IMR-90 (cell line): ENCODE measurements at regions of chr11 and their contacts with region 1.

Region 1: GRCh38 chr11:76512851-76513653 is 68.2 kb downstream of the EMSY start:
- DNase-seq: peak; percentile 65
- ATAC-seq: peak; percentile 80
- H3K4me3 ChIP-seq: no peak overlapping the region
- H3K27ac ChIP-seq: no peak overlapping the region
- H3K4me1 ChIP-seq: peaks cover 3% of the 10 kb centered on the region
- H3K27me3 ChIP-seq: no peaks in the 10 kb centered on the region
- CTCF ChIP-seq: peak; percentile 67
- POLR2A ChIP-seq: no peak
- RAD21 ChIP-seq: peak; percentile 73

Region 2: GRCh38 chr11:75896843-75897419 is 616.1 kb before region 1 on chr11:
- CTCF ChIA-PET with region 1: no interaction called
- POLR2A ChIA-PET with region 1: no interaction called
- dilution Hi-C with region 1: no loop called
- in situ Hi-C with region 1: no loop called
- intact Hi-C with region 1: loop called (anchors 2 kb)
- DNase-seq: peak; percentile 55
- ATAC-seq: peak; percentile 62
- H3K4me3 ChIP-seq: no peak overlapping the region
- H3K27ac ChIP-seq: no peak overlapping the region
- H3K4me1 ChIP-seq: no peaks in the 10 kb centered on the region
- H3K27me3 ChIP-seq: no peaks in the 10 kb centered on the region
- CTCF ChIP-seq: peak; percentile 76
- POLR2A ChIP-seq: no peak
- RAD21 ChIP-seq: peak; percentile 85

Region 3: GRCh38 chr11:76380967-76381719 is 131.9 kb before region 1 on chr11 and contains the starts of genes GVQW3 and THAP12:
- CTCF ChIA-PET with region 1: no interaction called
- POLR2A ChIA-PET with region 1: no interaction called
- dilution Hi-C with region 1: no loop called
- in situ Hi-C with region 1: no loop called
- intact Hi-C with region 1: loop called (anchors 5 kb)
- DNase-seq: peak; percentile 97
- ATAC-seq: peak; percentile 95
- H3K4me3 ChIP-seq: peak within 1 kb of the TSS; percentile 99
- H3K27ac ChIP-seq: peak within 1 kb of the TSS; percentile 73
- H3K4me1 ChIP-seq: peaks cover 8% of the 10 kb centered on the region
- H3K27me3 ChIP-seq: no peaks in the 10 kb centered on the region
- CTCF ChIP-seq: no peak; the same call in 1 of the 2 replicates
- POLR2A ChIP-seq: peak; percentile 39; the same call in 1 of the 2 replicates
- RAD21 ChIP-seq: no peak
- total RNA-seq, gene GVQW3: 0.83 and 1.1 TPM in 2 replicates
- total RNA-seq, gene THAP12: 25.1 and 48.3 TPM in 2 replicates

Region 4: GRCh38 chr11:76444384-76445123 is 68.5 kb before region 1 on chr11 and contains the start of gene EMSY:
- CTCF ChIA-PET with region 1: no interaction called
- POLR2A ChIA-PET with region 1: no interaction called
- dilution Hi-C with region 1: no loop called
- in situ Hi-C with region 1: no loop called
- intact Hi-C with region 1: loop called (anchors 2 kb)
- DNase-seq: peak; percentile 100
- ATAC-seq: peak; percentile 94
- H3K4me3 ChIP-seq: peak within 1 kb of the TSS; percentile 68
- H3K27ac ChIP-seq: peak within 1 kb of the TSS; percentile 82
- H3K4me1 ChIP-seq: no peaks in the 10 kb centered on the region
- H3K27me3 ChIP-seq: no peaks in the 10 kb centered on the region
- CTCF ChIP-seq: no peak
- POLR2A ChIP-seq: peak; percentile 97
- RAD21 ChIP-seq: no peak
- total RNA-seq, gene EMSY: 22.0 and 28.9 TPM in 2 replicates